AG04449 (cell line): ENCODE measurements at regions of chr1 and their contacts with region 1.

Region 1: GRCh38 chr1:163071405-163072255 is 2.5 kb downstream of the RGS4 start:
- DNase-seq: no peak
- H3K4me3 ChIP-seq: peak overlapping the region; percentile 62
- CTCF ChIP-seq: peak; percentile 88

Region 2: GRCh38 chr1:162854245-162854882 is 217.3 kb before region 1 on chr1:
- CTCF ChIA-PET with region 1: interaction called, 94 read pairs
- POLR2A ChIA-PET with region 1: interaction called, 7 read pairs
- DNase-seq: no peak
- H3K4me3 ChIP-seq: no peak overlapping the region
- CTCF ChIP-seq: peak; percentile 63

Region 3: DNA sequence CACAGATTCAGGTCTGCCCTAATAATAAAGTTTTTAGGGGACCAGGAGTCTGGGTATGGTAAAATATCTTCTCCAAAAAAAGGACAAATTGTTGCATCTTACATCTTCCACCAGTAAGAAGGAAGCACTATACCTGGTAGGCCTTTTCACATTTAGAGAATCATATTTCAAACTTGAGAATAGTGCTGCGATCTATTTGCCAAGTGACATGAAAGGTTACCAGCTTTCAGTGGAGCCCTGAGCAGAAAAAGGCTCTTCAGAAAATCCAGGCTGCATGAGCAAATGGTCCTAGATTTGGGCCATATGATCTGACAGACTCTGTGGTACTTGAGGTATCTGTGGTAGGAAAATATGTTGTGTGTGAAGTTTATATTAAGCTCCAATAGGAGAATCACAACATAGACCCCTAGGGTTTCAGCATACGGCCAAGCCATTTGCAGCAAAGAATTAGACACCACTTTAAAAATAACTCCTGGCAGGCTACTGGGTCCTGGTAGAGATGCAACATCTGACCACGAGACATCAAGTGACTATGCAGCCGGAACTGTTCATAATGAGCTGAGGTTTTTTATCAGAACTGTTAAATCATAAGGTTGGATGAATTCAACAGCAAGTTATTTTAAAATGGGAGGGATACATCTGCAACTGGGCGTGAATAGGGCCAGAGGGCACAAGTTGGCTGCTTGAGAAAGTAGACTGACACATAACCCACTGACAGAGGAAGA is 172.0 kb before region 1 on chr1:
- CTCF ChIA-PET with region 1: interaction called, 16 read pairs
- POLR2A ChIA-PET with region 1: interaction called, 13 read pairs
- DNase-seq: peak; percentile 83
- H3K4me3 ChIP-seq: no peak overlapping the region
- CTCF ChIP-seq: no peak

Region 4: GRCh38 chr1:163054181-163054591 is 17.4 kb before region 1 on chr1:
- CTCF ChIA-PET with region 1: interaction called, 97 read pairs
- POLR2A ChIA-PET with region 1: interaction called, 9 read pairs
- DNase-seq: no peak
- H3K4me3 ChIP-seq: no peak overlapping the region
- CTCF ChIP-seq: no peak

Region 5: GRCh38 chr1:163315773-163316374 is 244.2 kb after region 1 on chr1:
- CTCF ChIA-PET with region 1: interaction called, 210 read pairs
- POLR2A ChIA-PET with region 1: interaction called, 6 read pairs
- DNase-seq: no peak
- H3K4me3 ChIP-seq: no peak overlapping the region
- CTCF ChIP-seq: peak; percentile 39